Common myeloid progenitor, CD34-positive (primary cell): ENCODE measurements at regions of chr1 and their contacts with region 1.

Region 1: GRCh38 chr1:6245086-6245868 is 1.3 kb downstream of the HES3 start:
- DNase-seq: peak; percentile 78 to 89 (median 87)
- H3K4me3 ChIP-seq: no peak overlapping the region
- H3K27ac ChIP-seq: no peak overlapping the region
- H3K4me1 ChIP-seq: peaks cover 0 to 39% (median 25%) of the 10 kb centered on the region in 4 experiments
- H3K27me3 ChIP-seq: peaks cover 0 to 97% (median 53%) of the 10 kb centered on the region in 5 experiments

Region 2: DNA sequence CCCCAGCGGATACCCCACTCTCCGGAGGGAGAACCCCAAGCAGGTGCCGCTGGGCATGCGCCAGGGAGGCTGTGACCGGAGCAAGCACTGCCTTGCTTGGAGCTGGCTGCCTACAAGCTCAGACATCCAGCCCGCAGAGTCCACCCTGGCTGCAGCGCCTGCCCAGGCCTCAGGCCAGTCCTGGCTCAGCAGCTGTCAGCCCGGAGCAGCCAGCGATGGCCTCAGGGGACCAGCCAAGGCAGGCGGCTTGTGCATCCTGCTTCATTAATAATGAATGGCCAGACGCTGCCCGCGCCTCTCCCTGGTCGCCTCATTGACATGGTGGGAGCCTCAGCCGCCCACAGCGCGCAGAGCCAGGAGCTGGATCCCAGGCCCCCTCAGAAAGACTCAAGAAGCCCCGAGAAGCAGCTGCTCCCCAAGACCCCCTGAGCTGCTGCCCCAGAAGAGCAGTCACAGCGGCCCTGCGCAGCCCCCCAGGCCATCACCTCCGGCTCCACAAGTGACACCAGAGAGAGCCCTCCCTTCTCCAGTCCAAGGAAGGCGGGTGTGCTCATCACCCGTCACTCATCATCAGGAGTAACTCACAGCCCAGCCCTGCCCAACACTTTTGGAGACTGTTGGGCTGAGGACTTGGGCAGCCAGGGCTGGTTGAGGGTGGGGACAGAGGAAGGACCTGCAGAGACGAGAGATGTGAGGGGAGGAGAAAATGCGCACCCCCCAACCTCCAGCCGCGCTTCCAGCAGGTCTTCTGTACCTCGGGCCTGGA is 180.0 kb before region 1 on chr1:
- CTCF ChIA-PET with region 1: no interaction called
- POLR2A ChIA-PET with region 1: no interaction called
- DNase-seq: no peak
- H3K4me3 ChIP-seq: no peak overlapping the region
- H3K27ac ChIP-seq: no peak overlapping the region
- H3K4me1 ChIP-seq: no peaks in the 10 kb centered on the region
- H3K27me3 ChIP-seq: no peaks in the 10 kb centered on the region

Region 3: DNA sequence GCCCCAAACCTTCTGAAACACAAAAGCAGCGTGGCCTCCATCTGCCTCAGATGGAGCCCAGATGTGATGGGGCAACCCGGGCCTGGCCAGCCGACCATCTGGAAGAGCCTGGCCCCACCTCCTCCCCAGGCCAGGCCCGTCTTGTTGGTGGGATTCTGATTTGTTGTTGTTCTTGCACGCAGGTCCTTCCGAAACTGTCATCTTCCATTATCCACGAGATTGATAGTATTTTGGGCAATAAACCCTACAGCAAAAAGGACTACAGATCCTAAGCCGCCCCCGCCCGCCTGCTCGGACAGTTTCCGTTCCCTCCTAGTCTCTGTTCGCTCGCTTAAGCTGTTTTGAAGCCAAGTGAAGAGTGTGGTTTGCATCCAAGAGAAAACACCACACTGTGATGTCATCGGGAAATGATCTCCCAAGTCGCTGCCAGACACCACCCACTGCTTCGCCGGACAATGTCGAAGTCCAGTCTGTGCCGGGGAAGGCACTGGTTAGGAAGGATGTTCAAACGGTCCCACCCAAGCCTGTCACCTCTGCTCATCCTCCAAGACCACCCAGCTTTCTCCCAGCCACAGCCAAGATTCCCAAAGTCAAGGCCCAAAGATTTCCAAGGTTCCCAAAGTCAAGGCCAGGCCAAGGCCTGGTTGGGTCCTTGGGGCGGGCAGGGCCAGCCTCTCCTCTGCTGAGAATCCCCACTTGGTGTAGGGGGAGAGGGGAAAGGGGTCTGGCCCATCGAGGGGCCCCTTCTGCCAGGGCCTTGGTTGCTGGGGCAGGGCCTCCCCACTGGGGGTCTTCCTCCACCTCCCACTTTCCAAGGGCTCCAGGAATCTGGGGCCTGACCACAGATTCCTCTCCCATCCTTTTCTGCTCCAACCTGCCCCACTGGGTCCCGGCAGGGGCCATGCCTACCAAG is 146.7 kb before region 1 on chr1:
- CTCF ChIA-PET with region 1: no interaction called
- POLR2A ChIA-PET with region 1: no interaction called
- DNase-seq: no peak
- H3K4me3 ChIP-seq: no peak overlapping the region
- H3K27ac ChIP-seq: no peak overlapping the region
- H3K4me1 ChIP-seq: peaks cover 0 to 12% (median 4%) of the 10 kb centered on the region in 4 experiments
- H3K27me3 ChIP-seq: peaks cover 0 to 7% (median 3%) of the 10 kb centered on the region in 5 experiments

Region 4: GRCh38 chr1:6108937-6109614 is 136.2 kb before region 1 on chr1:
- CTCF ChIA-PET with region 1: interaction called, 10 read pairs
- POLR2A ChIA-PET with region 1: no interaction called
- DNase-seq: peak; percentile 76 to 89 (median 82)
- H3K4me3 ChIP-seq: no peak overlapping the region
- H3K27ac ChIP-seq: no peak overlapping the region
- H3K4me1 ChIP-seq: peaks cover 0 to 7% (median 2%) of the 10 kb centered on the region in 4 experiments
- H3K27me3 ChIP-seq: peaks cover 0 to 11% (median 0%) of the 10 kb centered on the region in 5 experiments

Region 5: DNA sequence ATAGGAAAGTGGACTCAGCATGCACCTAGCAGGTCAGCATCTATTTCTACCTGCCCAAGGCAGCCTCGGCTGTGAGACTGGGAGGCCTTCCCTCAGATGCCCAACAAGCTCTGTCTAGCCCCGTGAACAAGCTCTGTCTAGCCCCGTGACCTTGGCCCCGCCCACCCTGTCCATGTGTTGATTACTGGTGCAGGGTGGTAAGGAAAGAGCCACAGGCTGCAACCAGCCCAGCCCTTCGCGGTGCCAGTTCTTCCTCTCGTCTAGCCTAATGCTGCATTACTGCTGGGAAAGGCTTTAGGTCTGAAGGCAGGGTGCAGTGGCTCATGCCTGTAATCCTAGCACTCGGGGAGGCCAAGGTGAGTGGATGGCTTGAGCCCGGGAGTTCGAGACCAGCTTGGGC is 13.4 kb after region 1 on chr1:
- CTCF ChIA-PET with region 1: interaction called, 16 read pairs
- POLR2A ChIA-PET with region 1: interaction called, 3 read pairs
- DNase-seq: no peak
- H3K4me3 ChIP-seq: no peak overlapping the region
- H3K27ac ChIP-seq: no peak overlapping the region
- H3K4me1 ChIP-seq: peaks cover 0 to 16% (median 14%) of the 10 kb centered on the region in 4 experiments
- H3K27me3 ChIP-seq: peaks cover 0 to 63% (median 28%) of the 10 kb centered on the region in 5 experiments

Region 6: DNA sequence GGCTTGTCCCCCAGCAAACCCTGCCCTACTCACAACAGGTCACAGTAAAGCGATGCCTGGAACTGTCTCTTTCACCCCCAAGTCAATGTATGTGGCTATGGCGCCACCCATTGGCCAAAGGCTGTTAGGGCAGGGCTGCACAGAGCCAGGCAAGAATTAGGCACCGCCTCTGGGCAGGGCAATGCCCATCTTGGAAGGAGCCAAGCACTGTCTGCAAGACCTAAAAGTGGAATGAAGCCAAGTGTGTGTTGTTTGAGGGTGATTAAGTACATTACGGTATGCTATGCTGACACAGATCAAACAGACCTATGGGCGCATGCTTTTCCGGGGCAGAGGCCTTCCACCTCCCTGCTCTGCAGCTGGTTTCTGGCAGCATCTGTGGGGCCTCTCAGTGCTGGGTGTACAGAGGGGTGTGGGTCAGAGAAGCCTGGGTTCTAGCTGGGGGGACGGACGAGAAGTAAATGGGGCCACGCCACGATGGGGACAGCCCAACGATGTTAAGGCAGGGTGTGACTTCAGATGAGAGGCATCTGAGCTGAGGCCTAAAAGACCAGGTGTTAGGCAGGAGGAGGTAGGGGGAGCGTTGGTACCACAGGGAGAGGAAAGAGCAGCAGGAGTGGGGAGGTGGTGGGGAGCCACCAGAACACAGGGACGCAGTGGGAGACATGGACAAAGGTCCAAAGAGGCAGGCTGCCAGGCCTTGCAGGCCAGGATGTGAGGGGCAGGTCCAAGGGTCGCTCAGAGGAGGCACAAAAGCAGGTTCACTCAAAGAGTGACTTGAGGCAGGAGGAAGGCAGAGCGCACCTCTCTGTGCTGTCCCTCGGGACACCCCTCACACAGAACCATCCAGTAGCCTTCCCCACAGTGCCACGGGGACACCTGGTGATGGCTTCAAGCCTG is 98.5 kb after region 1 on chr1:
- CTCF ChIA-PET with region 1: interaction called, 113 read pairs
- POLR2A ChIA-PET with region 1: interaction called, 5 read pairs
- DNase-seq: peak; percentile 59 to 80 (median 75)
- H3K4me3 ChIP-seq: no peak overlapping the region
- H3K27ac ChIP-seq: no peak overlapping the region
- H3K4me1 ChIP-seq: peaks cover 0 to 11% (median 9%) of the 10 kb centered on the region in 4 experiments
- H3K27me3 ChIP-seq: no peaks in the 10 kb centered on the region

Region 7: GRCh38 chr1:6438047-6438525 is 192.8 kb after region 1 on chr1:
- CTCF ChIA-PET with region 1: interaction called, 19 read pairs
- POLR2A ChIA-PET with region 1: no interaction called
- DNase-seq: peak; percentile 66 to 75 (median 68)
- H3K4me3 ChIP-seq: no peak overlapping the region
- H3K27ac ChIP-seq: no peak overlapping the region
- H3K4me1 ChIP-seq: peaks cover 0 to 10% (median 3%) of the 10 kb centered on the region in 4 experiments
- H3K27me3 ChIP-seq: peaks cover 0 to 33% (median 15%) of the 10 kb centered on the region in 5 experiments